ENCODE measurements at regions of chr3 and their contacts with region 1.

Region 1: DNA sequence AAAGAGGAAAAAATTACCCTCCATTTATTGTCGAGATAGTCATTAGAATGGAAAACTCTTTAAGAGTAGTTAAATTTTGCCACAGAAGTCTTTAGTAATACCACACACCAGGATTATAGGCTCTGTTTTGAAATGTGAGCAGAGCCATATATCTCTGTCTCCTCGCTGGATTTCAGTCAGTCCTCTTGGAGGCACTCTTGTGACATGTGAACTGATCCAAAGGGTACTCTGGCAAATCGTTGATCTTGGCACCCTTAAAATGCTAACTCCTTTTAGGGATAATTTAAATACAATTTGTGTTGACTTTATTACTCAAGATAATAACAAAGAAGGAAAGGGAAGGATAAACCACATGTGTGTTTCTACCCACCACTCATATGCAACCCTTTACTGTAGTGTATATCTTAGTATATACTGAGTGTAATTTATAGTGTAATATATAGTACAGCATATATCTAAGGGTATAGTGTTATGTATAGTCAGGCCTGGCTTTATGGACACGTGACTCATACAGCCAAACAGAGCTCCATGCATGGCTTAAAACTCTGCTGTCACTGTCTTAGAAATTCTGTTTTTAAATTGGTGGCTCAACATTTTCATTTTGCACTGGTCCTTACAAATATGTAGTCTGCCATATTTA is 12.3 kb upstream of the KPNA4 start:
- DNase-seq: no peak
- ATAC-seq: peak; percentile 79 to 88 (median 86)
- H3K4me3 ChIP-seq: no peak overlapping the region
- H3K27ac ChIP-seq: peak overlapping the region in 5 of 12 donors; percentile 4 to 59 (median 20)
- H3K4me1 ChIP-seq: peaks cover 0 to 12% (median 0%) of the 10 kb centered on the region in 12 donors
- H3K27me3 ChIP-seq: no peaks in the 10 kb centered on the region
- CTCF ChIP-seq: peak in 9 of 12 donors; percentile 13 to 46 (median 32)
- POLR2A ChIP-seq: no peak

Region 2: DNA sequence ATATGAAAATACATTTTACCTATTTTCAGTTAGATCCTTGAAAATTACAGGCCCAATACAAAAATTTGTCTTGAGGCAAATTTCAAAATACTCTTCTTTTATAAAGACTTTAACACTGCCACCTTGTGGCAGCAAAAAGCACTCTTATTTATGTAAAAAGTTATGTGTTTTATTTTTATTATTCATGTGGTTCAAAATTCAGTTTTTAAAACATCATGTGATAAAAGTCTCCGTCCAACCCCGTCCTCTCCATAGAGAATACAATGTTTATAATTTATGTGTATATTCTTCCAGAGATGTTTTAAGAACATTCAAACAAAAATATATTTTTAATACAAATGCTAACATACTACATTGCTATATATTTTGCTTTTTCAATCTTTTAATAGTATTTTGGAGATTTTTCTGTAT is 91.2 kb before region 1 on chr3:
- intact Hi-C with region 1: no loop called
- DNase-seq: no peak
- ATAC-seq: no peak
- H3K4me3 ChIP-seq: peak overlapping the region in 1 of 12 donors; percentile 45
- H3K27ac ChIP-seq: no peak overlapping the region
- H3K4me1 ChIP-seq: peaks cover 0 to 7% (median 0%) of the 10 kb centered on the region in 12 donors
- H3K27me3 ChIP-seq: no peaks in the 10 kb centered on the region
- CTCF ChIP-seq: peak; percentile 46 to 73 (median 65)
- POLR2A ChIP-seq: no peak

Region 3: GRCh38 chr3:160921020-160921635 is 343.5 kb after region 1 on chr3:
- intact Hi-C with region 1: loop called in 1 of 10 experiments (anchors 10 kb)
- DNase-seq: peak in 3 of 5 donors; percentile 26 to 38 (median 27)
- ATAC-seq: peak in 3 of 4 donors; percentile 67 to 83 (median 79)
- H3K4me3 ChIP-seq: no peak overlapping the region
- H3K27ac ChIP-seq: no peak overlapping the region
- H3K4me1 ChIP-seq: peaks cover 0 to 39% (median 5%) of the 10 kb centered on the region in 12 donors
- H3K27me3 ChIP-seq: no peaks in the 10 kb centered on the region
- CTCF ChIP-seq: peak; percentile 67 to 92 (median 86)
- POLR2A ChIP-seq: no peak